ENCODE measurements at regions of chr3 and their contacts with region 1.

Region 1: GRCh38 chr3:183149901-183150750 is 12.4 kb downstream of the LAMP3 start:
- DNase-seq: no peak
- ATAC-seq: no peak
- H3K4me3 ChIP-seq: no peak overlapping the region
- H3K4me3 Mint-ChIP-seq: no peak overlapping the region
- H3K27ac ChIP-seq: no peak overlapping the region
- H3K27ac Mint-ChIP-seq: no peak overlapping the region
- H3K4me1 ChIP-seq: no peaks in the 10 kb centered on the region
- H3K4me1 Mint-ChIP-seq: no peaks in the 10 kb centered on the region
- H3K27me3 ChIP-seq: no peaks in the 10 kb centered on the region
- H3K27me3 Mint-ChIP-seq: no peaks in the 10 kb centered on the region

Region 2: GRCh38 chr3:183172051-183172639 is 22.0 kb after region 1 on chr3:
- CTCF ChIA-PET with region 1: no interaction called
- POLR2A ChIA-PET with region 1: no interaction called
- DNase-seq: no peak
- ATAC-seq: no peak
- H3K4me3 ChIP-seq: no peak overlapping the region
- H3K4me3 Mint-ChIP-seq: no peak overlapping the region
- H3K27ac ChIP-seq: no peak overlapping the region
- H3K27ac Mint-ChIP-seq: no peak overlapping the region
- H3K4me1 ChIP-seq: no peaks in the 10 kb centered on the region
- H3K4me1 Mint-ChIP-seq: no peaks in the 10 kb centered on the region
- H3K27me3 ChIP-seq: peaks cover 0 to 8% of the 10 kb centered on the region in 2 experiments
- H3K27me3 Mint-ChIP-seq: peaks cover 17 to 22% of the 10 kb centered on the region in 2 donors

Region 3: GRCh38 chr3:184791171-184791570 is 1641.0 kb after region 1 on chr3:
- CTCF ChIA-PET with region 1: no interaction called
- POLR2A ChIA-PET with region 1: interaction called in 1 of 2 experiments, 13 read pairs
- DNase-seq: no peak
- ATAC-seq: no peak
- H3K4me3 ChIP-seq: no peak overlapping the region
- H3K4me3 Mint-ChIP-seq: no peak overlapping the region
- H3K27ac ChIP-seq: no peak overlapping the region
- H3K27ac Mint-ChIP-seq: no peak overlapping the region
- H3K4me1 ChIP-seq: peaks cover 5 to 7% of the 10 kb centered on the region in 2 experiments
- H3K4me1 Mint-ChIP-seq: peaks cover 7 to 16% (median 12%) of the 10 kb centered on the region in 3 donors
- H3K27me3 ChIP-seq: peaks cover 0 to 6% of the 10 kb centered on the region in 2 experiments
- H3K27me3 Mint-ChIP-seq: peaks cover 0 to 2% of the 10 kb centered on the region in 2 donors